MCF 10A (cell line): ENCODE measurements at regions of chr14 and their contacts with region 1.

Region 1: DNA sequence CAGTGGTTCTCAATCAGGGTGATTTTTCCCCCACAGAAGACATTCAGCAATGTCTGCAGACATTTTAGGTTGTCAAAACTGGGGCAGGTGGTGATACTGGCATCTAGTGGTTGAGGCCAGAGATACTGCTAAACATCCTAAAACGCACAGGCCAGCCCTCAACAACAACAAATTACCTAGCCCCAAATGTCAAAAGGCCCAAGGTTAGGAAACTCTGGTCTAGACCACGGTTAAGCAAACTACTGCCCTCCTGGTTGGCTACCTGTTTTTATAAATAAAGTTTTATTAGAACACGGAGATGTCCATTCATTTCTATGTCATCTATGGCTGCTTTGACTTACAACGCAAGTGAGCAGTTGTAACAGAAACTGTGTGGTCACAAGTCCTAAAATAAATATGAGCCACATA is 186.7 kb downstream of the EFCAB11 start:
- DNase-seq: peak; percentile 51
- H3K4me3 Mint-ChIP-seq: no peak overlapping the region
- H3K27ac Mint-ChIP-seq: no peak overlapping the region
- H3K4me1 Mint-ChIP-seq: no peaks in the 10 kb centered on the region
- H3K27me3 Mint-ChIP-seq: peaks cover 7% of the 10 kb centered on the region
- CTCF ChIP-seq: peak; percentile 66

Region 2: GRCh38 chr14:88919502-88919901 is 848.4 kb before region 1 on chr14:
- CTCF ChIA-PET with region 1: no interaction called
- POLR2A ChIA-PET with region 1: no interaction called
- intact Hi-C with region 1: loop called (anchors 5 kb)
- DNase-seq: peak; percentile 36
- H3K4me3 Mint-ChIP-seq: no peak overlapping the region
- H3K27ac Mint-ChIP-seq: no peak overlapping the region
- H3K4me1 Mint-ChIP-seq: no peaks in the 10 kb centered on the region
- H3K27me3 Mint-ChIP-seq: no peaks in the 10 kb centered on the region
- CTCF ChIP-seq: peak; percentile 12

Region 3: DNA sequence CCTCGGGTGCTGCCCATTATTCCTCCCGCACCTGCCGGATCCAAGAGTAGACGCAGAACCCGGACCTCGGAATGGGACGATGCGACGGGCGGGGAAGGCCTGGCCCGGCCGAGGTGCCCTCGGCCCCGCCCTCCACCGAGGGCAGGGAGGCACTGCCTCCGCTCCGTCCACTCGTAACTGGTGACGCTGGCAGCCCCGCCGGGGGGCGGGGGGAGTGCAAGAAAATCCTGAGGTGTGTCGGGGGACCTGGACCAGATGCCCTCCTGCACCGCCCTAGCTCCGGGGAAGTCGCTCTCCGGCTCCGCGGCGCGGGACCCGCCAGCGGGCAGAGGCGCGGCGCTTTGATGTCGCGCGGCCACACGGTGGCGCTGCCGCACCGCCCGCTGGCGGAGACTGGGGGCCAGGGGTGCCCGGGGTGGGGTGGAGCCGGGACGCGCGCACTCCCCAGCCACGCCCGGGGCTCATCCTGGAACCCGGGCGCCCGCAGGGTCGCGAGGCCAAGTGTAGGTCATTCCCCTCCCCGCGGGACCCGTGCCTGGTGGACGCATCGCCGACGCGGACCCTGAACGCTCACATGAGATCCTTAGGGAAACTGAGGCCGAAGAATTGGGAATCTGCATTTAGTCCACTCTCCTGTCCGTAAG is 740.6 kb before region 1 on chr14:
- CTCF ChIA-PET with region 1: interaction called, 5 read pairs
- POLR2A ChIA-PET with region 1: interaction called, 3 read pairs
- intact Hi-C with region 1: loop called (anchors 5 kb)
- DNase-seq: peak; percentile 36
- H3K4me3 Mint-ChIP-seq: no peak overlapping the region
- H3K27ac Mint-ChIP-seq: no peak overlapping the region
- H3K4me1 Mint-ChIP-seq: no peaks in the 10 kb centered on the region
- H3K27me3 Mint-ChIP-seq: peaks cover 16% of the 10 kb centered on the region
- CTCF ChIP-seq: peak; percentile 93

Region 4: GRCh38 chr14:89040460-89041259 is 727.2 kb before region 1 on chr14:
- CTCF ChIA-PET with region 1: interaction called, 4 read pairs
- POLR2A ChIA-PET with region 1: no interaction called
- intact Hi-C with region 1: loop called (anchors 2 kb)
- DNase-seq: peak; percentile 91
- H3K4me3 Mint-ChIP-seq: peak overlapping the region; percentile 68
- H3K27ac Mint-ChIP-seq: peak overlapping the region; percentile 24
- H3K4me1 Mint-ChIP-seq: peaks cover 8% of the 10 kb centered on the region
- H3K27me3 Mint-ChIP-seq: no peaks in the 10 kb centered on the region
- CTCF ChIP-seq: peak; percentile 98

Region 5: GRCh38 chr14:89178802-89179535 is 588.9 kb before region 1 on chr14:
- CTCF ChIA-PET with region 1: interaction called, 5 read pairs
- POLR2A ChIA-PET with region 1: no interaction called
- intact Hi-C with region 1: loop called (anchors 1 kb)
- DNase-seq: no peak
- H3K4me3 Mint-ChIP-seq: no peak overlapping the region
- H3K27ac Mint-ChIP-seq: no peak overlapping the region
- H3K4me1 Mint-ChIP-seq: no peaks in the 10 kb centered on the region
- H3K27me3 Mint-ChIP-seq: no peaks in the 10 kb centered on the region
- CTCF ChIP-seq: no peak